ENCODE measurements at regions of chr11 and their contacts with region 1.

Region 1: GRCh38 chr11:66268283-66268951 is at the start of gene RAB1B:
- DNase-seq: peak; percentile 100
- H3K4me3 Mint-ChIP-seq: peak within 1 kb of the TSS; percentile 95
- H3K27ac Mint-ChIP-seq: peak within 1 kb of the TSS; percentile 95
- H3K4me1 Mint-ChIP-seq: peaks cover 26% of the 10 kb centered on the region
- H3K27me3 Mint-ChIP-seq: no peaks in the 10 kb centered on the region
- total RNA-seq, gene RAB1B: 112 to 115 TPM

Region 2: GRCh38 chr11:65662799-65663638 is 605.4 kb before region 1 on chr11 and contains the start of gene RELA:
- CTCF ChIA-PET with region 1: no interaction called
- intact Hi-C with region 1: loop called (anchors 1 kb)
- DNase-seq: peak; percentile 95
- H3K4me3 Mint-ChIP-seq: peak within 1 kb of the TSS; percentile 85
- H3K27ac Mint-ChIP-seq: peak within 1 kb of the TSS; percentile 94
- H3K4me1 Mint-ChIP-seq: peaks cover 37% of the 10 kb centered on the region
- H3K27me3 Mint-ChIP-seq: no peaks in the 10 kb centered on the region
- total RNA-seq, gene RELA: 66.9 to 68.5 TPM

Region 3: GRCh38 chr11:65817835-65818742 is 450.3 kb before region 1 on chr11:
- CTCF ChIA-PET with region 1: no interaction called
- intact Hi-C with region 1: no loop called
- DNase-seq: peak; percentile 96
- H3K4me3 Mint-ChIP-seq: peak overlapping the region; percentile 72
- H3K27ac Mint-ChIP-seq: peak overlapping the region; percentile 50
- H3K4me1 Mint-ChIP-seq: peaks cover 6% of the 10 kb centered on the region
- H3K27me3 Mint-ChIP-seq: no peaks in the 10 kb centered on the region

Region 4: GRCh38 chr11:65919146-65920033 is 349.0 kb before region 1 on chr11 and contains the start of gene DRAP1:
- CTCF ChIA-PET with region 1: no interaction called
- intact Hi-C with region 1: loop called (anchors 5 kb)
- DNase-seq: peak; percentile 99
- H3K4me3 Mint-ChIP-seq: peak within 1 kb of the TSS; percentile 93
- H3K27ac Mint-ChIP-seq: peak within 1 kb of the TSS; percentile 84
- H3K4me1 Mint-ChIP-seq: peaks cover 41% of the 10 kb centered on the region
- H3K27me3 Mint-ChIP-seq: no peaks in the 10 kb centered on the region
- total RNA-seq, gene DRAP1: 117 to 134 TPM

Region 5: DNA sequence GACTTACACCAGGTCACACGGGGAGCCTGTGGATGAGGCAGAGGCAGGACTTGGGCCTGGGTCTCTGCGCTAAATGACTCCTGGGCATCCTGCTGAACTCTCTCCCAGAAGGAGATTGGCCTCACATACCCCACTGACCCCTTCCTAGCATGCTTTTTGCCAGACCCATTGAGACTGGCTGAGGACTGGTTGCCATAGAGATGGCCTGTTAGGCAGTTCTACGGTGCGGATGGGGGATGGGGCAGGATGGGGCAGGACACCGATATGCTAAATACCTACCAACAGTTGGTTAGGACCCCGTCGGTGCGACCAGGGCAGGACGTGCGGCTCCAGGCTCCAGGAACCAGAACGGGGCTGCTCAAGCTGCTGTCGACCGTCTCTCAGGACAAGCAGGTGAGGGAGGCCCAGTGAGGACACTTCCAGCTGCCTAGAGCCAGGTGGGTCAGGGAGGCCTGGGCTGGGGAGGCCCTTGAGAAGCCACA is 322.9 kb before region 1 on chr11 and contains the start of gene TSGA10IP:
- CTCF ChIA-PET with region 1: no interaction called
- intact Hi-C with region 1: no loop called
- DNase-seq: no peak
- H3K4me3 Mint-ChIP-seq: no peak within 1 kb of the TSS
- H3K27ac Mint-ChIP-seq: no peak within 1 kb of the TSS
- H3K4me1 Mint-ChIP-seq: no peaks in the 10 kb centered on the region
- H3K27me3 Mint-ChIP-seq: no peaks in the 10 kb centered on the region
- total RNA-seq, gene TSGA10IP: not detected

Region 6: DNA sequence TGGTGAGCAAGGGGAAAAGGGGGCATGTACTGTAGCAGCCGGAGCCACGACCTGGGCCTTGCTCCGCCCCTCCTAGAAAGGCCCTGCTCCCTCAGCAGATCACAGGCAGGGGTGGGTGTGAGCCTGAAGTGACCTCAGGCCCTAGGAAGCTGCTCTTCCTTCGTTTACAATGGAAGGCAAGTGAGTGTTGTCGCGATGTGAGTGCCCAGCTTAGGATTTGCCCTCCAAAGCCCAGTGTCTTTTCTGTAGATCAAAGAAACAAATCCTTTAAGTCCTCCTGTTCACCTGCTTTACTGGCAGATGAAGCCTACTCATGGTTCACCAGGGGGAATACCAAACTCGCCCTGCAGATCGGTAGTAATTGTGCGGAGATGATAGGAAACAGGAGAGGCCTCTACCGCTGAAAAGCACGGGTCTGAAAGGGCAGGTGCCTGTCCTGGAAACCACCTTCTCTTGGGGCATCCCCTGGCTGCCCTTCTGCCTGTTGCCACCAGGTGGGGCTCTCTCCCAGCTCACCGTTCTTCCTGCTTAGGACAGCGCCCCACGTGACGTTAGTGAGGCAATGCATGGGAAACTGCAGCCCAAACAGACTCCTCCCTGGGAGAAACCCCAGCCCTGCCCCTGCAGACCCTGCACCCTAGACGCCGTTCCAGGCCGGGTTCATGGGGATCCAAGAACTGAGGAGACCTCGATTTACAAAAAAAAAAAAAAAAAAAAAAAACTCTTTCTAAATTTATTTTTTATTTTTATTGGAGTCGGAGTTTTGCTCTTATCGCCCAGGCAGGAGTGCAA is 45.9 kb before region 1 on chr11:
- CTCF ChIA-PET with region 1: interaction called, 3 read pairs
- intact Hi-C with region 1: loop called (anchors 1 kb)
- DNase-seq: peak; percentile 98
- H3K4me3 Mint-ChIP-seq: peak overlapping the region; percentile 33
- H3K27ac Mint-ChIP-seq: peak overlapping the region; percentile 99
- H3K4me1 Mint-ChIP-seq: peaks cover 23% of the 10 kb centered on the region
- H3K27me3 Mint-ChIP-seq: no peaks in the 10 kb centered on the region

Region 7: GRCh38 chr11:66288671-66289547 is 20.5 kb after region 1 on chr11 and contains the start of gene YIF1A:
- CTCF ChIA-PET with region 1: no interaction called
- intact Hi-C with region 1: loop called (anchors 1 kb)
- DNase-seq: peak; percentile 99
- H3K4me3 Mint-ChIP-seq: peak within 1 kb of the TSS; percentile 81
- H3K27ac Mint-ChIP-seq: peak within 1 kb of the TSS; percentile 70
- H3K4me1 Mint-ChIP-seq: peaks cover 35% of the 10 kb centered on the region
- H3K27me3 Mint-ChIP-seq: peaks cover 18% of the 10 kb centered on the region
- total RNA-seq, gene YIF1A: 45.9 to 49.7 TPM

Region 8: GRCh38 chr11:66299186-66299585 is 30.8 kb after region 1 on chr11:
- CTCF ChIA-PET with region 1: no interaction called
- intact Hi-C with region 1: no loop called
- DNase-seq: no peak
- H3K4me3 Mint-ChIP-seq: no peak overlapping the region
- H3K27ac Mint-ChIP-seq: no peak overlapping the region
- H3K4me1 Mint-ChIP-seq: no peaks in the 10 kb centered on the region
- H3K27me3 Mint-ChIP-seq: no peaks in the 10 kb centered on the region